BJ (cell line): ENCODE measurements at regions of chr6 and their contacts with region 1.

Region 1: DNA sequence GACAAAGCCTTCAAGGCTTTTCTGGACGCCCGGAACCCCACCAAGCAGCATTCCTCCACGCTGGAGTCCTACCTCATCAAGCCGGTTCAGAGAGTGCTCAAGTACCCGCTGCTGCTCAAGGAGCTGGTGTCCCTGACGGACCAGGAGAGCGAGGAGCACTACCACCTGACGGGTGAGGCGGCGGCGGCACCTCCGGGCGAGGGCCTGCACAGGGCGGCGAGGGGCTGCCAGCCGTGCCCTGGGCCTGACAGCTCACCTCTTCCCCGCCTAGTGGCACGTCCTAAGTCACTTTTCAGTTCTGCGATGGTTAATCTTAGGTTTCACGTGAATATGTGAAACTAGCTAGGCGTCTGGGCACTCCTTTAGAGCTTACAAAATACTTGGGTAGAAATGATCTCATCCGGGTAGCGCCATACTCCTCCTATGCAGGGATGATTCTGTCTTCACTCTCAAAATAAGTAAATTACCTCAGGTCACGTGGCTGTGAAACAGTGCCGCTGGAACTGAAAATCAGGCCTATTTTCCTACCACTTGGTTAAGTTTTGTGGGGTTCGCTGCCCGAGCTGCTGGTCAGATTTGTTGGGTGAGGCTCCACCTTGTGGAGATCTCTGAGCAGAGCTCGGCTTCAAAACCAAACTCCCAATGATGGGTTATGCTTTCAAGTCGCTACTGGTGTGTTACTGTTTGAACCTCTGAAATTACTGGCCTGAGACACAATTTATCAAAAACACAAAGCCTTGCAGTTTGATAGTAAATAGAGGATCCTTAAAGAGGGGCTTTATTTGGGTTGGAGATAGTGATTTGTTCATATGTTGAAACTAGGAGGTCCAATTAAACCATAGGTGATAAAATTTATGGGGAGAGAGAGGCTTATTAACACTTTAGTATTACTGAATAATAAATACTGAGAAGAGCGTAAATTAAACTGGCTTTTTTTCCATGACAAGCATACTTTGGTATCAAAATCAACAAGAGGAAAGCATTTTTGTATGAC is 15.5 kb upstream of the CLDN20 start:
- DNase-seq: no peak
- H3K4me3 ChIP-seq: no peak overlapping the region
- H3K27me3 ChIP-seq: no peaks in the 10 kb centered on the region
- CTCF ChIP-seq: peak; percentile 85

Region 2: GRCh38 chr6:155174576-155175211 is 73.6 kb before region 1 on chr6:
- CTCF ChIA-PET with region 1: interaction called, 79 read pairs
- POLR2A ChIA-PET with region 1: no interaction called
- DNase-seq: no peak
- H3K4me3 ChIP-seq: no peak overlapping the region
- H3K27me3 ChIP-seq: no peaks in the 10 kb centered on the region
- CTCF ChIP-seq: peak; percentile 67

Region 3: GRCh38 chr6:155183095-155183494 is 65.2 kb before region 1 on chr6:
- CTCF ChIA-PET with region 1: interaction called, 79 read pairs
- POLR2A ChIA-PET with region 1: no interaction called
- DNase-seq: no peak
- H3K4me3 ChIP-seq: no peak overlapping the region
- H3K27me3 ChIP-seq: no peaks in the 10 kb centered on the region
- CTCF ChIP-seq: no peak

Region 4: DNA sequence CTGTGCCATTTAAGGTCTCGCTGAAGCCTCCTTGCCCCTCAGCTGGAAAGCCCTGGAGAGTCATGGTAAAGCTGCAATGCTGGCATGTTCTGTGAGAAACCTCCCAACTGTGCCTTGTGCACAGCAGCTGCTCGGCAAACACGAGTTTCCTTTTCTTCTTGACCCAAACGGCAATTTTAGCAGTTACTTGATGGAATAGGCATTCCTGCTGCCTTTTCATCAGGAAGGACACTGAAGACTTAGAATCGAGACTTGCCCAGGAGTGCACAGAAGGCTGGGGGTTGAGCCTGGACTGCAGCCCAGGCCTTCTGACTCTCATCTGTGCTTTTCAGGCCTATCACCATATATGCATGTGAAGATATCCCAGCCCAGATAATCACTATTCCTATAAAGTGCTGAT is 13.2 kb before region 1 on chr6:
- CTCF ChIA-PET with region 1: interaction called, 12 read pairs
- POLR2A ChIA-PET with region 1: interaction called, 3 read pairs
- DNase-seq: no peak
- H3K4me3 ChIP-seq: no peak overlapping the region
- H3K27me3 ChIP-seq: no peaks in the 10 kb centered on the region
- CTCF ChIP-seq: no peak

Region 5: DNA sequence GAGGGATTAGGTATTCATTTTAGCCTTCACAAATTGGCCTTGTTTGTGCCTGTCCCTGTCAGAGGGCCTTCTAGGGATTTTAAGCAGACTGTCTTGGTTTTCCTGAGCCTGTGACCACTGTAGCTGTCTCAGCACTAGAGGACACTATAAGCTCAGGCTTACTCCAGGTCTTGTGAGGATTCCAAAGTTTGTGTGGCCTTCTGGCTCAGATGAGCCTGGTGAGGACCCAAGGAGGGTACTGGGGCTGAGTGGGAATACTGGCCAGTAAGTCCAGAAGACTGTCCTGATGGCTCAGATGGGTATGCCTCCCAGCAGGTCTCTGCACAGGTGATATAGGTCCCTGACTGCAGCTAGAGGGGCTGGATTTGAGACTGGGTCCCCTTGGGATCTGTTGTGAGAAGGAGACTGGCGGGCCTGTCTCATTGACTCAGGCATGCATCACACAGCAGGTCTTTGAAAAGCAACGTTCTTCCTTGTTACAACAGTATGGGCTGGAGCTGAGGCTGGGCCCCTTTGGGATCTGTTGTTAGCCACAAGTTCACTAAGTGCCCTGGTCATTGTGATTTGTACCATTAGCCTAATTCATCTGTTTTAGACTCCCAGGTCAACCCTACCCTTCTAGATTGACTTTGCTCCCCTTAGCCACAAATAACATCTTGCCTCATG is 92.3 kb after region 1 on chr6:
- CTCF ChIA-PET with region 1: no interaction called
- POLR2A ChIA-PET with region 1: no interaction called
- DNase-seq: no peak
- H3K4me3 ChIP-seq: no peak overlapping the region
- H3K27me3 ChIP-seq: no peaks in the 10 kb centered on the region
- CTCF ChIP-seq: peak; percentile 57